ENCODE measurements at regions of chr10 and their contacts with region 1.

Region 1: DNA sequence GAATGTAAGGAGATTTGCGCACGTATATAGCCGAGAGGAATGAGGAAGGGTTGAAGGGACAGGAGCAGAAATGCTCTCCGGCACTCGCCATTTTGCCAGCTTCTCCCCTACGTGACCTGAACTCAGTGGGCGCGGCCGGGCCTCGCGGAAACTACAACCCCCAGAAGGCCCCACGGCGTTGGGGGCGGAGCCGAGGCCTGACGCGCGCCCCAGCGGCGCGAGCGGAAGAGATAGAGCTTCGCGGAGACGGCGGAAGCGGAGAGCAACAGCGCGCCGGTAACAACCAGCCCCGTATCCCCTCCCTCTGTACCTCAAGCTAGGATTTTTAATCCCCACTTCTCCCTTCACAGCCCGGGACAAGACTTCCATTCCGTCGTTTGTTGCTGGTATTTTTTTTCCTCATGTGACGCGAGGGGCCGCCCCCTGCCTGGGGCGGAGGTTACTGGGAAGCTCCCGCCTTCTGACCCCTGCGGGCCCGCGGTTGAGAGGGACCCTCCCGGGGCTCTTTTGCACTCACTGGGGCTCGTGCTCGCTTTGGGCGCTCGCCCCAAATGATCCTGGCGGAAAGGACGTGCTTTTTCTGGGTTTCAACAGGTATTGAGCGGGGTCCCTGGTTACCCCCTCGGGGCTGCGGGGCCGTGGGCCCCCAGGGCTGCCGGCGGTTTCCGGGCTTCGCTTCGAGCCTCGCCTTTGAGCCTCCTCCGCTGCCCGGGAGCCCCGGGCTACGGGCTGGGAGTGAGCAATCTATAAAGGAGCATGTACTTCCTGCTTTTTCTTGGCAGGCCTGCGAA is at the start of gene R3HCC1L:
- DNase-seq: peak; percentile 94
- ATAC-seq: peak; percentile 90
- H3K4me3 ChIP-seq: peak within 1 kb of the TSS; percentile 80 to 97 (median 90)
- H3K4me3 Mint-ChIP-seq: peak within 1 kb of the TSS; percentile 97
- H3K27ac ChIP-seq: peak within 1 kb of the TSS; percentile 87 to 97
- H3K27ac Mint-ChIP-seq: peak within 1 kb of the TSS; percentile 98
- H3K4me1 ChIP-seq: peaks cover 31 to 36% of the 10 kb centered on the region in 2 donors
- H3K4me1 Mint-ChIP-seq: peaks cover 63% of the 10 kb centered on the region
- H3K27me3 ChIP-seq: no peaks in the 10 kb centered on the region
- H3K27me3 Mint-ChIP-seq: no peaks in the 10 kb centered on the region
- CTCF ChIP-seq: no peak
- total RNA-seq, gene R3HCC1L: 25.1 and 26.8 TPM in 2 replicates

Region 2: GRCh38 chr10:98170249-98171117 is 35.9 kb after region 1 on chr10:
- CTCF ChIA-PET with region 1: interaction called, 11 read pairs
- POLR2A ChIA-PET with region 1: interaction called, 4 read pairs
- intact Hi-C with region 1: no loop called
- DNase-seq: peak; percentile 59
- ATAC-seq: peak; percentile 33
- H3K4me3 ChIP-seq: no peak overlapping the region
- H3K4me3 Mint-ChIP-seq: no peak overlapping the region
- H3K27ac ChIP-seq: no peak overlapping the region
- H3K27ac Mint-ChIP-seq: no peak overlapping the region
- H3K4me1 ChIP-seq: peaks cover 23 to 25% of the 10 kb centered on the region in 2 donors
- H3K4me1 Mint-ChIP-seq: peaks cover 33% of the 10 kb centered on the region
- H3K27me3 ChIP-seq: no peaks in the 10 kb centered on the region
- H3K27me3 Mint-ChIP-seq: no peaks in the 10 kb centered on the region
- CTCF ChIP-seq: peak; percentile 91

Region 3: GRCh38 chr10:98242823-98243222 is 108.2 kb after region 1 on chr10:
- CTCF ChIA-PET with region 1: no interaction called
- POLR2A ChIA-PET with region 1: no interaction called
- intact Hi-C with region 1: no loop called
- DNase-seq: no peak
- ATAC-seq: no peak
- H3K4me3 ChIP-seq: no peak overlapping the region
- H3K4me3 Mint-ChIP-seq: no peak overlapping the region
- H3K27ac ChIP-seq: no peak overlapping the region
- H3K27ac Mint-ChIP-seq: no peak overlapping the region
- H3K4me1 ChIP-seq: no peaks in the 10 kb centered on the region
- H3K4me1 Mint-ChIP-seq: no peaks in the 10 kb centered on the region
- H3K27me3 ChIP-seq: no peaks in the 10 kb centered on the region
- H3K27me3 Mint-ChIP-seq: no peaks in the 10 kb centered on the region
- CTCF ChIP-seq: peak; percentile 25

Region 4: DNA sequence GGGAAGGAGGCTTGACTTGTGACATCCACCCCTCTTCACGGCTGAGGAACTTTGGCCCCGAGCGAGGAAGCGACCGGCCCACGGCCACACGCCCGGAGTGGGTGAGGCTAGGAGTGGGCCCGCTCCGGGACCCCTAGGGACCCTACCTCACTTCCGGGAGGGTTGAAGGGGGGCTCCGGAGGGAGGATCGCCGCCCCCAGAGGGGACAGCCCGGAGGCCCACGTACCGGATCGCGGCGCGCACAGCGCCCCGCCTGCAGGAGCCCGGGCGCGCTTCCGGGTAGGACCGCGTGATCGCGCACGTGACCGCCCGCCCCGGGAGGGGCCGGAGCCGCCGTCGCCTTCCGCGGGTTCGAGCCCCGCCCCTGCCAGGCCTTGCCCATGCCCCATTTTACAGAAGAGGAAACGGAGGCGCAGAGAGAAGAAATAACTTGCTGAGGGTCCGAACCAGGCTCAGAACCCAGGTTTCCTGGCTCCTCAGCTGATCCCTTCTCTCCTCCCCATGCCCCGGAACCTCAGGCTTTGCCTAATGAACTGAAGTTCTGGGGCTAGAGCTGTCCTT is 312.1 kb after region 1 on chr10 and contains the start of gene HPS1:
- CTCF ChIA-PET with region 1: no interaction called
- POLR2A ChIA-PET with region 1: interaction called, 5 read pairs
- intact Hi-C with region 1: loop called (anchors 1 kb)
- DNase-seq: peak; percentile 92
- ATAC-seq: peak; percentile 85
- H3K4me3 ChIP-seq: peak within 1 kb of the TSS; percentile 55 to 88 (median 82)
- H3K4me3 Mint-ChIP-seq: peak within 1 kb of the TSS; percentile 90
- H3K27ac ChIP-seq: peak within 1 kb of the TSS; percentile 94 to 97
- H3K27ac Mint-ChIP-seq: peak within 1 kb of the TSS; percentile 95
- H3K4me1 ChIP-seq: peaks cover 28 to 39% of the 10 kb centered on the region in 2 donors
- H3K4me1 Mint-ChIP-seq: peaks cover 49% of the 10 kb centered on the region
- H3K27me3 ChIP-seq: no peaks in the 10 kb centered on the region
- H3K27me3 Mint-ChIP-seq: no peaks in the 10 kb centered on the region
- CTCF ChIP-seq: no peak
- total RNA-seq, gene HPS1: 125 TPM in 2 replicates

Region 5: GRCh38 chr10:99732033-99732912 is 1597.6 kb after region 1 on chr10 and contains the starts of genes COX15 and CUTC:
- CTCF ChIA-PET with region 1: no interaction called
- POLR2A ChIA-PET with region 1: no interaction called
- intact Hi-C with region 1: loop called (anchors 5 kb)
- DNase-seq: peak; percentile 95
- ATAC-seq: peak; percentile 93
- H3K4me3 ChIP-seq: peak within 1 kb of the TSS; percentile 84 to 99 (median 93)
- H3K4me3 Mint-ChIP-seq: peak within 1 kb of the TSS; percentile 95
- H3K27ac ChIP-seq: peak within 1 kb of the TSS; percentile 82 to 83
- H3K27ac Mint-ChIP-seq: peak within 1 kb of the TSS; percentile 99
- H3K4me1 ChIP-seq: peaks cover 13 to 24% of the 10 kb centered on the region in 2 donors
- H3K4me1 Mint-ChIP-seq: peaks cover 32% of the 10 kb centered on the region
- H3K27me3 ChIP-seq: no peaks in the 10 kb centered on the region
- H3K27me3 Mint-ChIP-seq: no peaks in the 10 kb centered on the region
- CTCF ChIP-seq: peak; percentile 64
- total RNA-seq, gene COX15: 39.5 and 47.4 TPM in 2 replicates
- total RNA-seq, gene CUTC: 32.0 and 33.3 TPM in 2 replicates

Measured in B cell (primary cell).